Posterior vena cava (tissue), 2 donors: ENCODE measurements at regions of chr2 and their contacts with region 1.

Region 1: DNA sequence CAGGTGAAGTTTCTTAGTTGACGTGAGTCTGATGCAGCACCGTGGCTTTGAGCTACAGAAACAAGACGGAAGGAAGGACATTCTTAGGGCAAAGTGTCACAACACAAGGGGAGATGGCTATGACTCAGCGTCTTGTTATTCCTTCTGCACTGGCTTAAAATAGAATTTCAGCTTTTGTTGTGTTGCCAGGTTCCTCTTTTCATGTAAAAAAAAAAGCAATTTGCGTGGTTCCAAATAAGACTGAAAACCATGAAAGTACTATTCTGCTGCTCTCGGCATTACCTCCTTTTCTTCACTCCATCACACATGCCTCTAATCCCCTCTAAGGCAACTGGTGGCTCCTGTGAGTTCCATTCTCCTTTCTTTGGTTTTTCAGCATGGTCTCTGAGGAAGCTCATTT is 150.1 kb downstream of the ANTXR1 start:
- DNase-seq: no peak

Region 2: GRCh38 chr2:68936427-68936826 is 226.7 kb before region 1 on chr2:
- intact Hi-C with region 1: loop called in 1 of 2 experiments (anchors 5 kb)
- DNase-seq: no peak

Region 3: GRCh38 chr2:69073928-69074570 is 89.1 kb before region 1 on chr2:
- intact Hi-C with region 1: loop called in 1 of 2 experiments (anchors 10 kb)
- DNase-seq: no peak

Region 4: GRCh38 chr2:69177785-69178636 is 14.9 kb after region 1 on chr2:
- intact Hi-C with region 1: no loop called
- DNase-seq: peak; percentile 99